ENCODE measurements at regions of chr15 and their contacts with region 1.

Region 1: GRCh38 chr15:44286814-44287452 is 1.6 kb upstream of the GOLM2 start:
- DNase-seq: no peak
- ATAC-seq: no peak
- H3K4me3 Mint-ChIP-seq: peak overlapping the region; percentile 90
- H3K27ac Mint-ChIP-seq: peak overlapping the region; percentile 97
- H3K4me1 Mint-ChIP-seq: peaks cover 32% of the 10 kb centered on the region
- H3K27me3 Mint-ChIP-seq: peaks cover 2% of the 10 kb centered on the region

Region 2: GRCh38 chr15:42741710-42742109 is 1545.2 kb before region 1 on chr15:
- CTCF ChIA-PET with region 1: no interaction called
- POLR2A ChIA-PET with region 1: no interaction called
- intact Hi-C with region 1: no loop called
- DNase-seq: no peak
- ATAC-seq: no peak
- H3K4me3 Mint-ChIP-seq: no peak overlapping the region
- H3K27ac Mint-ChIP-seq: no peak overlapping the region
- H3K4me1 Mint-ChIP-seq: peaks cover 5% of the 10 kb centered on the region
- H3K27me3 Mint-ChIP-seq: no peaks in the 10 kb centered on the region

Region 3: DNA sequence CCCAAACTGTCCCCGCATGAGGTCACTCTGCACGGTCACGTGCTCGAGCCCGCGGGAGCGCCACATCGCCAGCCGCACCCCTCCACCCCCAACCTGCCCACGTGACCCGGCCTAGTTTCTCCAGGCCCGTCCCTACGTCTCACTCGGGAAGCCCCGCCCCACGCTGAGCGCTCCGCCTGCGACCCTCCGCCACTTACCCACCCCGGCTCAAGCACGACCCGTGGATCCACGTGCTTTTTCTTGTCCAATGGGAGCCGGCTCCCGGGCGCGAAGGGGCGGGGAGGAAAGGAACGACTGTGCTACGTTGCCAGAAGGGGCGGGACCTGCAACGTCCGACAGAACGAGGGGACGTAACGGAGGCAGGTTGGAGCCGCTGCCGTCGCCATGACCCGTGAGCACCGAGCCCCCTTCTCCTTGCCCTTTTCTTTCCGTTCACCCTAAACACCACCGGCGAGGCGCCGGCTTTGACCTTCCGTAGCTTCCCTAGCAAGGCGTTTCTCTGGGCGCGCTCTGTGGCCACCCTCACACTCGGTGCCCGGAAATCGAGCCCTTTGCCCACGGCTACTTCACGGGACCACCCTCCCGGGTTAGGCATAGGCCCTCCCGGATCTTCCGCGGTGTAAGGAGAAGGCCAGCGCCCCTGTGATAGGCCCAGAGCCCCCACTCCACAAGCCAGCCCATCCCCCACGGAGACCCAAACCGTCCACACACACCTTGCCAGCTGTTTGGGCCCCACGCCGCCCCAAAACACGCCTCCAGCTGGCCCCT is 494.8 kb before region 1 on chr15 and contains the start of gene SERF2:
- CTCF ChIA-PET with region 1: no interaction called
- POLR2A ChIA-PET with region 1: interaction called, 3 read pairs
- intact Hi-C with region 1: loop called in 1 of 2 experiments (anchors 1 kb)
- DNase-seq: peak; percentile 100
- ATAC-seq: peak; percentile 98
- H3K4me3 Mint-ChIP-seq: peak within 1 kb of the TSS; percentile 97
- H3K27ac Mint-ChIP-seq: peak within 1 kb of the TSS; percentile 97
- H3K4me1 Mint-ChIP-seq: peaks cover 35% of the 10 kb centered on the region
- H3K27me3 Mint-ChIP-seq: no peaks in the 10 kb centered on the region
- total RNA-seq, gene SERF2: 710 to 718 TPM

Region 4: DNA sequence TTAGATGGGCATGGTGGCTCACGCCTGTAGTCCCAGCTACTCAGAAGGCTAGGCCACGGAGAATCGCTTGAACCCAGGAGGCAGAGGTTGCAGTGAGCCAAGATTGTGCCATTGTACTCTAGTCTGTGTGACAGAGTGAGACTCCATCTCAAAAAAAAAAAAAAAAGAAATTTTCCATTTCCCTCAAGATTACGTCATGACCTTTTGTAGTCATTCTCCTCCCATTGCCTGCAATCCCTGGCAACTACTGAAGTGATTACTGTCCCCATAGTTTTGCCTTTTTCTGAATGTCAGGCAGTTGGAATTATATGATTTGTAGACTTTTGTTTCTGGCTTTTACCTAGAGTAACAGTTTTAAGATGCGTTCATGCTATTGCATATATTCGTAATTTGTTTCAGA is 432.1 kb before region 1 on chr15:
- CTCF ChIA-PET with region 1: no interaction called
- POLR2A ChIA-PET with region 1: no interaction called
- intact Hi-C with region 1: no loop called
- DNase-seq: no peak
- ATAC-seq: no peak
- H3K4me3 Mint-ChIP-seq: no peak overlapping the region
- H3K27ac Mint-ChIP-seq: no peak overlapping the region
- H3K4me1 Mint-ChIP-seq: no peaks in the 10 kb centered on the region
- H3K27me3 Mint-ChIP-seq: no peaks in the 10 kb centered on the region

Region 5: GRCh38 chr15:44308415-44308814 is 21.5 kb after region 1 on chr15:
- CTCF ChIA-PET with region 1: interaction called, 5 read pairs
- POLR2A ChIA-PET with region 1: interaction called, 6 read pairs
- intact Hi-C with region 1: loop called (anchors 1 kb)
- DNase-seq: peak; percentile 62
- ATAC-seq: peak; percentile 90
- H3K4me3 Mint-ChIP-seq: peak overlapping the region; percentile 58
- H3K27ac Mint-ChIP-seq: peak overlapping the region; percentile 92
- H3K4me1 Mint-ChIP-seq: peaks cover 48% of the 10 kb centered on the region
- H3K27me3 Mint-ChIP-seq: no peaks in the 10 kb centered on the region

Region 6: GRCh38 chr15:44536962-44537734 is 250.2 kb after region 1 on chr15 and contains the start of gene EIF3J:
- CTCF ChIA-PET with region 1: interaction called, 3 read pairs
- POLR2A ChIA-PET with region 1: no interaction called
- intact Hi-C with region 1: loop called (anchors 1 kb)
- DNase-seq: peak; percentile 97
- ATAC-seq: peak; percentile 95
- H3K4me3 Mint-ChIP-seq: peak within 1 kb of the TSS; percentile 75
- H3K27ac Mint-ChIP-seq: peak within 1 kb of the TSS; percentile 95
- H3K4me1 Mint-ChIP-seq: peaks cover 45% of the 10 kb centered on the region
- H3K27me3 Mint-ChIP-seq: no peaks in the 10 kb centered on the region
- total RNA-seq, gene EIF3J: 106 to 143 TPM

Region 7: DNA sequence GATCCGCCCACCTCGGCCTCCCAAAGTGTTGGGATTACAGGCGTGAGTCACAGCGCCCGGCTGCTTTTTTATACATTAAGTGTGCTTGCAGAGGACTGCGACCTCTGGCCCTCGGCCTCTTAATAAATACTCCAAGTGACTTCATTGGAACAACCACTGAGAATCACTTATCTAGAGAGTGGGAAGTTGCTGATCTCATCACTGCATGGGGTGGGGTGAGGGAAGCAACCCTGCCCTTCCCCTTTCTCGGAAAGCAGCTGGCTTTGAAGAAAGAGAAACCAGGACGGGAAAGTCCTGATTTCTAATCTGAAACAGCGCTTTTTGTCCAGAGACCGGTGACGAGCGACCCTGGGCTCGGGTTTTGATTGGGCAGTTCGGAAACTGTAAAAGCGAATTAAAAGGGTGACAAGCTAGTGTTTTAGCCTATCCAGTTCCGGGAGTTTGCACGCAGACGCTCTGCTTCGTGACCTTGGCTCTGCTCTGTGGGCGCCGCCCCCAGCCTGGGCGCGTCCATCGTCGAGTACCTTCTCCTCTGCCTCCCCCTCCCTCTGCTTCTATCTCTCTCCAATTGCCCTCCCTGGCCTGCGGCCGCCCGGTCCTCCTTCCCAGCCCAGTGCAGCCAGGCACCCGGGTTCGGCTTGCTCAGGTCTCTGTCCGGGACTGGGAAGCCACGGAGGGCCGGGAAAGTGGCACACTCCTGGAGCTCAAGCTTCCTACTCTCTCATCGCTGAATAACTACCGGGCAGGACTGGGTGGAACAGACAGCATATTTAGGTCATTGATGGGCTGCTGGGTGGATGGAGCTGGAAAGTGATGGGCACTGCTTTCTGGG is 441.9 kb after region 1 on chr15:
- CTCF ChIA-PET with region 1: no interaction called
- POLR2A ChIA-PET with region 1: interaction called, 4 read pairs
- intact Hi-C with region 1: loop called in 1 of 2 experiments (anchors 5 kb)
- DNase-seq: peak; percentile 96
- ATAC-seq: peak; percentile 78
- H3K4me3 Mint-ChIP-seq: peak overlapping the region; percentile 91
- H3K27ac Mint-ChIP-seq: peak overlapping the region; percentile 99
- H3K4me1 Mint-ChIP-seq: peaks cover 68% of the 10 kb centered on the region
- H3K27me3 Mint-ChIP-seq: no peaks in the 10 kb centered on the region